BJ (cell line): ENCODE measurements at regions of chr9 and their contacts with region 1.

Region 1: DNA sequence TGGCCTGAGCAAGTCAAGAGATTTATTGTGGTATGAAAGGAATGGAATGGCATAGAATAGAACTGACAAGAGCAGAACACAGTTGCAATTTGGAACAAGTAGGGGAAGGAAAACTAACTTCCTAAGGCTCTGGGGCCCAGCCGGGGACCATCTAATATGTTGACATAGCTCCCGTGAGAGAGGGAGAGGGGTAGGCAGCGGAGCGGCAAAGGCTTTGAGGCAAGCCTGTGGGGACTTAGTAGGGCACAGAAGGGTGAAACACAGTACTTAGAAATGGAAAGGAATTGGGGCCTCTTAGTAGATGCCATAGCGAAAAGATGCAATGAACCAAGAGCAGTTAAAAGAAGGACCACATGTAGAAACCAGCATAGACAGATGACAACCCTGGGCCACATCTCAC is 11.8 kb upstream of the GNA14 start:
- DNase-seq: no peak
- H3K4me3 ChIP-seq: no peak overlapping the region
- H3K27me3 ChIP-seq: no peaks in the 10 kb centered on the region
- CTCF ChIP-seq: no peak

Region 2: GRCh38 chr9:77514886-77515711 is 144.8 kb before region 1 on chr9:
- CTCF ChIA-PET with region 1: no interaction called
- POLR2A ChIA-PET with region 1: no interaction called
- DNase-seq: peak; percentile 79
- H3K4me3 ChIP-seq: no peak overlapping the region
- H3K27me3 ChIP-seq: no peaks in the 10 kb centered on the region; the same call in 1 of the 2 replicates
- CTCF ChIP-seq: no peak

Region 3: GRCh38 chr9:77648234-77649120 is 11.4 kb before region 1 on chr9 and contains the start of gene GNA14:
- CTCF ChIA-PET with region 1: interaction called, 11 read pairs
- POLR2A ChIA-PET with region 1: no interaction called
- DNase-seq: no peak
- H3K4me3 ChIP-seq: peak within 1 kb of the TSS; percentile 30
- H3K27me3 ChIP-seq: peaks cover 23% of the 10 kb centered on the region
- CTCF ChIP-seq: no peak
- polyA plus RNA-seq, gene GNA14: 0.22 and 0.25 TPM in 2 replicates